Gastrocnemius medialis (tissue), 4 donors: ENCODE measurements at regions of chr5 and their contacts with region 1.

Region 1: GRCh38 chr5:73519531-73520283 is 21.5 kb downstream of the BTF3 start:
- DNase-seq: peak; percentile 11 to 27
- ATAC-seq: peak; percentile 72 to 91
- H3K4me3 ChIP-seq: no peak overlapping the region
- H3K27ac ChIP-seq: no peak overlapping the region
- H3K4me1 ChIP-seq: no peaks in the 10 kb centered on the region
- H3K27me3 ChIP-seq: no peaks in the 10 kb centered on the region
- CTCF ChIP-seq: peak in 4 of 5 experiments; percentile 47 to 66 (median 56)
- POLR2A ChIP-seq: no peak

Region 2: GRCh38 chr5:73540192-73540591 is 20.5 kb after region 1 on chr5:
- in situ Hi-C with region 1: no loop called
- intact Hi-C with region 1: loop called (anchors 2 kb)
- DNase-seq: no peak
- ATAC-seq: no peak
- H3K4me3 ChIP-seq: no peak overlapping the region
- H3K27ac ChIP-seq: no peak overlapping the region
- H3K4me1 ChIP-seq: no peaks in the 10 kb centered on the region
- H3K27me3 ChIP-seq: peaks cover 0 to 3% (median 3%) of the 10 kb centered on the region in 3 donors
- CTCF ChIP-seq: no peak
- POLR2A ChIP-seq: no peak